ENCODE measurements at regions of chr10 and their contacts with region 1.

Region 1: DNA sequence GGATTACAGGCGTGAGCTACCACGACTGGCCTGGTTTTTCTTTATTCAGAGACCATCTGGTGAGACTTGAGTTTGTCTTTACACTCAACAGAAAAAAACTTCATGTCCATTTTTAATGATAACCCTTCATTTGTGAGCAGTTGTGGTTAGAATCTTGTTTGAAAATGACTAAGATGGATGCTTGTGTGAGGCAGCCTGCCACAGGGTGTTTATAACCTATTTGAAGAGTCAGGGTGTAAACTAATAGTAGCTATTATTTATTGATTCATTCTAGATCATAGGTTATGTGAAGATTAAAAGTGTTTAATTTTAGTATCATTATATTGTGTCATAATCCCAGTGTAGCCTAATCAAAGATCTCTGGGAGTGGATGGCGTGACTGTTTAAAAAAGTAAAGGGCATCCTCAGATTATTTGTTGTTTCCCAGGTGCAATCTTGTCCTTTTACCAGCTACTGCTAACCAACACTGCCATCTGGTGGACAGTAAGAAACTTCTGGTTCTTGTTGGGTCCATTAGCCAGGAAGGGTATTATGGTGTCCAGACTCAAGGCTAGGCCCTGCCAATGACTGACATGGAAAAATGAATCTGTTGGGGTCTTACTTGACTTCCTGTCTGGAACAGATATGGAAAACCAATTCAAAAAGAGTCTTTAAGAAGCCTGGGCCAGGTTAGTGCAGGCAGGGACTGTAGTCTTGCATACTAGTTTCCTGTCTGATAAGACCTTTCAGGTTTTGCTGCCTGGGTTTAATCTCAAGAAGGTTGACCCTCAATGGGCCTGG is 24.9 kb downstream of the NRBF2 start:
- DNase-seq: peak; percentile 55

Region 2: GRCh38 chr10:63027531-63027930 is 130.5 kb before region 1 on chr10:
- in situ Hi-C with region 1: no loop called
- DNase-seq: no peak

Region 3: GRCh38 chr10:63720072-63720537 is 562.1 kb after region 1 on chr10:
- in situ Hi-C with region 1: loop called (anchors 25 kb)
- DNase-seq: peak; percentile 58